Activated naive CD4-positive, alpha-beta T cell treated with anti-CD3 and anti-CD28 coated beads for 36 hours (primary cell): ENCODE measurements at regions of chr13 and their contacts with region 1.

Region 1: GRCh38 chr13:23466144-23467002 is 32.9 kb upstream of the SACS start:
- DNase-seq: peak; percentile 75
- H3K4me3 Mint-ChIP-seq: peak overlapping the region; percentile 62
- H3K27ac Mint-ChIP-seq: no peak overlapping the region
- H3K4me1 Mint-ChIP-seq: peaks cover 8% of the 10 kb centered on the region
- H3K27me3 Mint-ChIP-seq: no peaks in the 10 kb centered on the region

Region 2: GRCh38 chr13:23512761-23513395 is 46.5 kb after region 1 on chr13:
- CTCF ChIA-PET with region 1: no interaction called
- intact Hi-C with region 1: no loop called
- DNase-seq: no peak
- H3K4me3 Mint-ChIP-seq: no peak overlapping the region
- H3K27ac Mint-ChIP-seq: no peak overlapping the region
- H3K4me1 Mint-ChIP-seq: no peaks in the 10 kb centered on the region
- H3K27me3 Mint-ChIP-seq: peaks cover 33% of the 10 kb centered on the region

Region 3: DNA sequence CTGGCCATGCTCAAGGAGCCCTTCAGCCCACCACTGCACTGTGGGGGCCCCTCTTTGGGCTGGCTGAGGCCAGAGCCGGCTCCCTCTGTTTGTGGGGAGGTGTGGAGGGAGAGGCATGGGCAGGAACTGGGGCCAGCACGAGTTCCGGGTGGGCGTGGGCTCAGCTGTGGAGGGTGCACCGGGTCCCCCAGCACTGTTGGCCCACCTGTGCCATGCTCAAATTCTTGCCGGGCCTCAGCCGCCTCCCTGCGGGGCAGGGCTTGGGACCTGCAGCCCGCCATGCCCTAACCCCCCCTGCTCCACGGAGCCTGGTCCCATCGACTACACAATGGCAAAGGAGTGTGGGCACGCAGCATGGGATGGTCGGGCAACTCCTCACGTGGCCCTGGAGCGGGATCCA is 65.1 kb after region 1 on chr13:
- CTCF ChIA-PET with region 1: no interaction called
- intact Hi-C with region 1: no loop called
- DNase-seq: no peak
- H3K4me3 Mint-ChIP-seq: no peak overlapping the region
- H3K27ac Mint-ChIP-seq: no peak overlapping the region
- H3K4me1 Mint-ChIP-seq: no peaks in the 10 kb centered on the region
- H3K27me3 Mint-ChIP-seq: peaks cover 4% of the 10 kb centered on the region

Region 4: DNA sequence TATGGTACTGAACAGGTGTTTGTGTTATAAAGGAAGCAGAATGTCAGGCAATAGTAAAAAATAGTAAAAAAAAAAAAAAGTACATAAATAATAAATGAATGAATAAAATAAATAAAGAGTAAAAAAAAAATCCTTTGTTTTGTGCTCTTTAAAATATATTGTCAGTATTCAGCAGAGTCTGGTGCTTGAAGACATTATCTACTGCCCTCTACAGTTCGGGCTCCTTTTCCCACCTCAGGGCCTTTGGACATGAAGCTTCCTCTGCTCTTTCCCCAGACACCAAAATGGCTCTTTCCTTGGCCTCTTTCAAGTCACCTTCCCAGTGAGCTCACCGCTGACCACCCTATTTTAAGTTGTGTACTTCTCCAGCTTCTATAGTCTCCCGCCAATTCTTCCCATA is 241.3 kb after region 1 on chr13:
- CTCF ChIA-PET with region 1: no interaction called
- intact Hi-C with region 1: loop called (anchors 2 kb)
- DNase-seq: peak; percentile 26
- H3K4me3 Mint-ChIP-seq: no peak overlapping the region
- H3K27ac Mint-ChIP-seq: no peak overlapping the region
- H3K4me1 Mint-ChIP-seq: no peaks in the 10 kb centered on the region
- H3K27me3 Mint-ChIP-seq: no peaks in the 10 kb centered on the region

Region 5: DNA sequence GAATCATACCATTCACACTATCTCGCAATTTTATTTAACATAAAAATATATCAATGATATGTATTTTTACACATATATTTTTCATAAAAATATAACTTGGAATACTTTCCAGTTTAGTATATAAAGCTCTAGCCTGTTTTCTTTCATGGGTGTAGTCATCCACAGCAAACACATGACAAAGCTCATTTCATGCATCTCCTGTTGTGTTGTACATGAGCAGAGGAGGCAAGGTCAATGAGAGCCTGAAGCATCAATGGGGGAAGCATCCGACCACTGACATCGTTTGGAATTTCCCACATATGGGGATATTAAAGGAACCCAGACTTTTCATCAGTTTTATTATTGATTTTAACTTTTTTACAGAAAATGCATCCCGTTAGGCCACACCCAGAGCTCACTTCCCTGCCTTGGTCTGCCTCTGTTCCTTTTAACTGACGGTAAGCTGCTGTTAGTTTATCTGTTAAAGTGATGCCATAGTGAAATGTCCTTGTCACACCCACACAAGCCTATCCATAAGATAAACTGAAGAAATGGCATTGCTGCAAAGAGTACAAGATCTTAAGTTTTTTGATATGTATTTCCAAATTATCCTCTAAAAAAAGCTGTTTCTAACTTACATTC is 378.8 kb after region 1 on chr13:
- CTCF ChIA-PET with region 1: no interaction called
- intact Hi-C with region 1: no loop called
- DNase-seq: no peak
- H3K4me3 Mint-ChIP-seq: no peak overlapping the region
- H3K27ac Mint-ChIP-seq: no peak overlapping the region
- H3K4me1 Mint-ChIP-seq: peaks cover 9% of the 10 kb centered on the region
- H3K27me3 Mint-ChIP-seq: no peaks in the 10 kb centered on the region

Region 6: GRCh38 chr13:23871616-23872220 is 405.3 kb after region 1 on chr13:
- CTCF ChIA-PET with region 1: interaction called, 14 read pairs
- intact Hi-C with region 1: loop called (anchors 1 kb)
- DNase-seq: no peak
- H3K4me3 Mint-ChIP-seq: no peak overlapping the region
- H3K27ac Mint-ChIP-seq: no peak overlapping the region
- H3K4me1 Mint-ChIP-seq: no peaks in the 10 kb centered on the region
- H3K27me3 Mint-ChIP-seq: no peaks in the 10 kb centered on the region

Region 7: GRCh38 chr13:23888658-23889614 is 422.6 kb after region 1 on chr13 and contains the start of gene MIPEP:
- CTCF ChIA-PET with region 1: interaction called, 5 read pairs
- intact Hi-C with region 1: loop called (anchors 1 kb)
- DNase-seq: peak; percentile 89
- H3K4me3 Mint-ChIP-seq: peak within 1 kb of the TSS; percentile 81
- H3K27ac Mint-ChIP-seq: peak within 1 kb of the TSS; percentile 51
- H3K4me1 Mint-ChIP-seq: peaks cover 24% of the 10 kb centered on the region
- H3K27me3 Mint-ChIP-seq: no peaks in the 10 kb centered on the region
- total RNA-seq, gene MIPEP: 15.4 to 17.0 TPM

Region 8: DNA sequence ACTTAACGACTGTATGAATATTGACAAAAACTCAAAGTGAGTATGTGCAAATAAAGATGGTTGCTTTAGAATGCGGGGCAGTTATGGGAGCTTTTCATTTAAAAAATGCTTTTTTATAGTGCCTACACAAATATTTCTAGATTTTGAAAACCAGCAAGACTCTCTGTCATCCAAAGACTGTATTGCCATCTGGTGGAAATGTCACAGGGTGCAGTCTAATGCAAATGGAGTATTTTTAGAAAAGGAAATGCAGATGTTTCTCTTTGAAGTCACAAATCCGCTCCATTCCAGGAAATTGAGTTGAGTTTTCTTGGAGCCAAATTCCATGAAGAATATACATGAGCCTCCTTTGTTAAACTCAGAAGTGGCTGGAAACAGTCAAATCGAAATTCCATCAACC is 433.2 kb after region 1 on chr13:
- CTCF ChIA-PET with region 1: interaction called, 9 read pairs
- intact Hi-C with region 1: loop called (anchors 1 kb)
- DNase-seq: peak; percentile 53
- H3K4me3 Mint-ChIP-seq: no peak overlapping the region
- H3K27ac Mint-ChIP-seq: no peak overlapping the region
- H3K4me1 Mint-ChIP-seq: peaks cover 2% of the 10 kb centered on the region
- H3K27me3 Mint-ChIP-seq: peaks cover 29% of the 10 kb centered on the region

Region 9: DNA sequence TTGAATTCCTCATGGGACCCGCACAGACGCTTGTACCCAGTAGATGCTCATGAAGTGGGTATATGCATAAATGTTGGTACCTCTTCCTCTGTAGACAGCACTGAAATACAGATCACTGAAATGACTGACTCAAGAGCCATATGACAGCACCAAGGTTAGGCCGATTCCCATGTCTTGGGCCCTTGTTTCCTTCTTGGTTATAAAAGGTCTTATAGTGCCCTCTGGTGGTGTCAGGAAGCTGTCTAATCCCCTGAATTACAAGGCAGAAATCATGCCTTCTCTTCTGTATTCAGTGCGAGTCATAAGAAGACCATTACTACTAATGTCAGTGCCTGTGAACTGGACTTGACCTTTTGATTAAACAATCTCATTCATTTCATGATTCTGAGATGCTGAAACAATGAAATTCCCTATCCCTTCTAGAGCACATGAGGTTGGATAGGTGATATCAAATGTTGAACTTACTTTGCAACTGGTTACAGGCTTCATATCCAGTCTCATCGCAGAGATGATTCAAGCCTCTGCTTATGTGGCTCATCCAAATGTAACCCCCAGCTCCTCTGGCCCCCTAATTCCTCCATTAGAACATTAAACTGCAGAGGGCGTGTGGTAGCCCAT is 753.8 kb after region 1 on chr13:
- CTCF ChIA-PET with region 1: no interaction called
- intact Hi-C with region 1: loop called (anchors 5 kb)
- DNase-seq: peak; percentile 72
- H3K4me3 Mint-ChIP-seq: no peak overlapping the region
- H3K27ac Mint-ChIP-seq: no peak overlapping the region
- H3K4me1 Mint-ChIP-seq: peaks cover 22% of the 10 kb centered on the region
- H3K27me3 Mint-ChIP-seq: no peaks in the 10 kb centered on the region